CD4-positive, alpha-beta T cell (primary cell): ENCODE measurements at regions of chr11 and their contacts with region 1.

Region 1: GRCh38 chr11:76919887-76920746 is 59.4 kb downstream of the ACER3 start:
- DNase-seq: peak; percentile 7 to 85 (median 46)
- ATAC-seq: peak; percentile 80
- H3K4me3 ChIP-seq: peak overlapping the region; percentile 36
- H3K4me3 Mint-ChIP-seq: peak overlapping the region; percentile 72
- H3K27ac ChIP-seq: no peak overlapping the region
- H3K27ac Mint-ChIP-seq: no peak overlapping the region
- H3K4me1 ChIP-seq: peaks cover 5% of the 10 kb centered on the region
- H3K4me1 Mint-ChIP-seq: peaks cover 13% of the 10 kb centered on the region
- H3K27me3 ChIP-seq: no peaks in the 10 kb centered on the region
- H3K27me3 Mint-ChIP-seq: no peaks in the 10 kb centered on the region
- CTCF ChIP-seq: peak; percentile 78

Region 2: DNA sequence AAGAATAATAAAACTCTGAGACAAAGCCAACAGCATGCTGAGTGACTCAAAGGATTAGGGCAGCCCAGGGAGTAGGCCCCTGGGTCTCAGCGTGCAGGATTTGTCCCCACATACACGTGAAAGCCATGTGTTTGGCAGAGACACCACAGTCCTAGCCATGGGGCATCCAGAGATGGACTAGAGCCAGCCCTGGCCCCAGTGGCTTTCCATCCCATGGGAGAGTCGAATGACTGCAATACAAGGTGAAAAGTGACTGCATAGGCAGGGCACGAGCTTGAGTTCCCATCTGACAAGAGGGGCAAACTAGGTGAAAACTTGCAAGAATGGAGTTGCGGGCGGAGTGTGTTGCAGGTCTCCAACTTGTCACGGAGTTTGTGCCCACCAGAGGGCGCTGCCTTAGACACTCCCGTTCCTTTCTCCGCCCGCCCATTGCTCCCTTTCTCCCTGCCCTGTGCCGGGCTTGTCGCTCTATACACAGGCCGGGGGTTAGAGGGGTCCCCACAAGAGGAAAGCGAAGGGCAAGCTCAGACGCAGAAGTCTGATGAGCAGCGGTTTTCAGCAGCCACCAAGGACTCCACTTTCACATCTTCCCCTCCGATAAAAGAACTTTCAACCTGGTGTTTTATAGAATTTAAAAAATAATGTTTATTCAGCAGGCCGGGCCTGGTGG is 112.8 kb before region 1 on chr11:
- CTCF ChIA-PET with region 1: interaction called, 5 read pairs
- POLR2A ChIA-PET with region 1: no interaction called
- intact Hi-C with region 1: loop called (anchors 2 to 5 kb)
- DNase-seq: peak; percentile 34 to 80 (median 53)
- ATAC-seq: peak; percentile 37
- H3K4me3 ChIP-seq: no peak overlapping the region
- H3K4me3 Mint-ChIP-seq: peak overlapping the region; percentile 28
- H3K27ac ChIP-seq: no peak overlapping the region
- H3K27ac Mint-ChIP-seq: no peak overlapping the region
- H3K4me1 ChIP-seq: peaks cover 22% of the 10 kb centered on the region
- H3K4me1 Mint-ChIP-seq: peaks cover 40% of the 10 kb centered on the region
- H3K27me3 ChIP-seq: peaks cover 0 to 2% of the 10 kb centered on the region in 2 experiments
- H3K27me3 Mint-ChIP-seq: peaks cover 16% of the 10 kb centered on the region
- CTCF ChIP-seq: peak; percentile 71

Region 3: GRCh38 chr11:76962583-76963416 is 42.7 kb after region 1 on chr11:
- CTCF ChIA-PET with region 1: no interaction called
- POLR2A ChIA-PET with region 1: no interaction called
- intact Hi-C with region 1: no loop called
- DNase-seq: peak in 2 of 14 experiments; percentile 1 to 8
- ATAC-seq: no peak
- H3K4me3 ChIP-seq: no peak overlapping the region
- H3K4me3 Mint-ChIP-seq: no peak overlapping the region
- H3K27ac ChIP-seq: no peak overlapping the region
- H3K27ac Mint-ChIP-seq: no peak overlapping the region
- H3K4me1 ChIP-seq: peaks cover 6% of the 10 kb centered on the region
- H3K4me1 Mint-ChIP-seq: peaks cover 8% of the 10 kb centered on the region
- H3K27me3 ChIP-seq: no peaks in the 10 kb centered on the region
- H3K27me3 Mint-ChIP-seq: no peaks in the 10 kb centered on the region
- CTCF ChIP-seq: no peak

Region 4: DNA sequence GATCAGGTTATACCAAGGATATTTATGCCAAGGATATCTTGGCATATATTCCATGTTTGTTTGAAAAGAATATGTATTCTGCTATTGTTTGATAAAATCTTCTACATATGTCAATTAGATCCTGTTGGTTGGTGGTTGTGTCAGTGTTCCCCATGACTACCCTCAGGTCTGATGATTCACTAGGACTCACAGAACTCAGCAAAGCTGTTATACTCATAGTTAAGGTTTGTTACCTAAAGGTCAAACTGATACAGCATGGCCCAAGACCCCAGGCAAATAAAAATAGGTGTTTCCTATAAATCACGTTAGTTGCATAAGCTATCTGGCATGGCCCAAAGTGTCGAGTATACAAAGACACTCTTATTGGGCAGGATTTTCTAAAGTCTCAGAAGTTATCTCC is 83.8 kb after region 1 on chr11:
- CTCF ChIA-PET with region 1: no interaction called
- POLR2A ChIA-PET with region 1: no interaction called
- intact Hi-C with region 1: no loop called
- DNase-seq: no peak
- ATAC-seq: no peak
- H3K4me3 ChIP-seq: no peak overlapping the region
- H3K4me3 Mint-ChIP-seq: no peak overlapping the region
- H3K27ac ChIP-seq: no peak overlapping the region
- H3K27ac Mint-ChIP-seq: no peak overlapping the region
- H3K4me1 ChIP-seq: no peaks in the 10 kb centered on the region
- H3K4me1 Mint-ChIP-seq: no peaks in the 10 kb centered on the region
- H3K27me3 ChIP-seq: no peaks in the 10 kb centered on the region
- H3K27me3 Mint-ChIP-seq: no peaks in the 10 kb centered on the region
- CTCF ChIP-seq: no peak

Region 5: GRCh38 chr11:77091146-77091940 is 171.2 kb after region 1 on chr11:
- CTCF ChIA-PET with region 1: interaction called, 6 read pairs
- POLR2A ChIA-PET with region 1: no interaction called
- intact Hi-C with region 1: loop called (anchors 1 to 2 kb)
- DNase-seq: peak; percentile 65 to 86 (median 74)
- ATAC-seq: peak; percentile 99
- H3K4me3 ChIP-seq: no peak overlapping the region
- H3K4me3 Mint-ChIP-seq: no peak overlapping the region
- H3K27ac ChIP-seq: no peak overlapping the region
- H3K27ac Mint-ChIP-seq: no peak overlapping the region
- H3K4me1 ChIP-seq: peaks cover 7% of the 10 kb centered on the region
- H3K4me1 Mint-ChIP-seq: peaks cover 5% of the 10 kb centered on the region
- H3K27me3 ChIP-seq: no peaks in the 10 kb centered on the region
- H3K27me3 Mint-ChIP-seq: no peaks in the 10 kb centered on the region
- CTCF ChIP-seq: peak; percentile 89